Left cardiac atrium (tissue), 4 donors: ENCODE measurements at regions of chr20 and their contacts with region 1.

Region 1: GRCh38 chr20:24619212-24619611 is 149.8 kb downstream of the SYNDIG1 start:
- DNase-seq: no peak
- ATAC-seq: peak in 1 of 2 donors; percentile 61

Region 2: GRCh38 chr20:24469116-24469893 is 149.9 kb before region 1 on chr20 and contains the start of gene SYNDIG1:
- intact Hi-C with region 1: loop called in 1 of 2 experiments (anchors 10 kb)
- DNase-seq: peak; percentile 52
- ATAC-seq: peak; percentile 68 to 70
- total RNA-seq, gene SYNDIG1: 16.7 to 28.4 TPM